ENCODE measurements at regions of chr4 and their contacts with region 1.

Region 1: DNA sequence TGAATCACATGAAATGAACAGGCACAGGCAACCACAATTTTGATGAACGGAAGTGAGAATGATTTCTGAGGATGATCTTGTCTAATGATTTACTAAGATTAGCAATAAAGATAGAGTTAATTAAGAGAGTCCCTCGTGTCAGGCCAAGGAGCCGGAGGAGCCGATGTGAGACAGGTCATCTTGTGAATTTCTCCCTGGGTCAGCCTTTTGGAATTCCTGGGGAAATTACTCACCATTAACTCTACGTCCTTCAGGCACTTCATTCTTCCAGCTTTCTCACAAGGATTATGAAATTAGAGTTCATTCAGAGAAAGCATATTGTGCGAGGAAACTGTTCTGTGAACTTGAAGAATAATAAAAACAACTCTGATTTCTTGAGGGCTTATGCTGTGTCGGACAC is 86.7 kb downstream of the PSAPL1 start:
- DNase-seq: no peak
- H3K4me3 ChIP-seq: no peak overlapping the region
- H3K4me3 Mint-ChIP-seq: no peak overlapping the region
- H3K27ac Mint-ChIP-seq: no peak overlapping the region
- H3K4me1 ChIP-seq: no peaks in the 10 kb centered on the region
- H3K4me1 Mint-ChIP-seq: no peaks in the 10 kb centered on the region
- H3K27me3 ChIP-seq: no peaks in the 10 kb centered on the region
- H3K27me3 Mint-ChIP-seq: no peaks in the 10 kb centered on the region
- CTCF ChIP-seq: no peak

Region 2: DNA sequence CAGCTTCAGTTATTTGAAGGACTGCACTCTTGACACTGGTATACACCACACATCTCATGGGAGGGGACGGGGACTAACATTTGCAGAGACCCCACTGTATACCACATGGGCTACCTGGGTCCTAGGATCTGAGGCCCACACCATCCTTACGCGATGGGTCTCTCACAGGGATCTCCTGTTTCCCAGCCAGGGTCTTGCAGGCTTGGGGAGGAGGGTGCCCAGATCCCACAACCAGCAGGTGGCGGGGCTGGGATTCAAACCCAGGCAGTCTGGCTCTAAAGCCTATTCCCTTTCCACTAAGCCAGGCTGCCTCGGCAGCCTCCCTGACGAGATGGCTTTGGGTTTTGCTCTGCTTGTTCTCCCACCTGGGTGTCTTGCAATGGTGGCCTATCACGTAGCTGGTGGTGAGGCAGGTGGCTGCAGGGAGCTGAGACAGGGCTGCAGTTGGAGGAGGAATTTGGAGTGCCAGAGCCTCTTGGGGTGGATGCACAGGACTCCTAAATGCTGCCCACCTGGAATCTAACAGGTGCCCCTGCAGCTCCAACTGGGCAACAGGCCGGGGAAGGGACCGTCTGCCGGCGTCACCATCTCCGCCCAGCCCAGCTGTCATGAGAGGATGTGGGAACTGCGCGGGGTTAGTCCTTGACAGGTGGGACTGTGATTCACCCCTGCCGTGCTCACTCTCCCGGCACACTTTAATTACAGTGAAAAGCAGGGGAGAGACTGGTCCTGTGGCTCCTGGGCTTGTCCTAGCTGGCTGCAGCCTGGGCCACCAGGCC is 23.9 kb before region 1 on chr4:
- CTCF ChIA-PET with region 1: interaction called, 10 read pairs
- POLR2A ChIA-PET with region 1: no interaction called
- intact Hi-C with region 1: no loop called
- DNase-seq: peak in 1 of 2 experiments; percentile 40
- H3K4me3 ChIP-seq: no peak overlapping the region
- H3K4me3 Mint-ChIP-seq: no peak overlapping the region
- H3K27ac Mint-ChIP-seq: no peak overlapping the region
- H3K4me1 ChIP-seq: no peaks in the 10 kb centered on the region
- H3K4me1 Mint-ChIP-seq: peaks cover 9% of the 10 kb centered on the region
- H3K27me3 ChIP-seq: no peaks in the 10 kb centered on the region
- H3K27me3 Mint-ChIP-seq: no peaks in the 10 kb centered on the region
- CTCF ChIP-seq: peak in 1 of 2 experiments; percentile 11

Region 3: DNA sequence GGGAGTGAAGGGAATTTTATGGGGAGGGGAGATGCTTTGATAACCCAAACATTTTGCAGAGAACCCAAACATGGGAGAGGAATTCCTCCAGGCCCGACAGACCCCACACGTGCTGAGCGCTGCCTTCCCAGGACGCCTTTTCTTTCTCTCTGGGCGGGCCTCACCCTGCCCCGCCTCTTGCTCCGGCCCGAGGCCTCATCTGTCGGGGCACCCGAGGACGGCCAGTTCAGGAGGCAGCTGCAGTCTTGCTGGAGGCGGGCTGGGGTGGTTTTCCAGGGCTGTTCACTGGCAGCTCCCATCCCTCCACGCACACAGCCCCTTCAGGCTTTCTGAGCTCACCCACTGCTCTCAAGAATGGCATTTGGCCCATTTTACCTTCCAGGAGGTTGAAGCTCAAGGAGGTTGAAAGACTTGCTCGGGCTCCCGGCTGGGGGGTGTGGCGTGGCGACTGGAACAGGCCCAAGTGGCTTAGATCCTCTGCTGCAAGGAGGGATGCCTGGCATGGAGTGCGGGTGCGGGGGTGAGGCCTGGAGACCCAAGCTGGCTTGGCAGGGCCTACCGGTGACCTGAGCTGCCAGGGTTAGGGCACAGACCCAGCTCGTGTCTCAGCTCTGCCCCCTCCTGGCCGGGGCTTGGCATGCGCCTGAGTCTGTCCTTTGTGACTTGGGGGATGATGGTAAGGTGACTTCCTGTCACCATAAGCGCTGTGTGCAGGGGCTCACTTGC is 12.5 kb before region 1 on chr4:
- CTCF ChIA-PET with region 1: interaction called, 11 read pairs
- POLR2A ChIA-PET with region 1: no interaction called
- intact Hi-C with region 1: no loop called
- DNase-seq: peak; percentile 63 to 76
- H3K4me3 ChIP-seq: no peak overlapping the region
- H3K4me3 Mint-ChIP-seq: no peak overlapping the region
- H3K27ac Mint-ChIP-seq: no peak overlapping the region
- H3K4me1 ChIP-seq: no peaks in the 10 kb centered on the region
- H3K4me1 Mint-ChIP-seq: no peaks in the 10 kb centered on the region
- H3K27me3 ChIP-seq: no peaks in the 10 kb centered on the region
- H3K27me3 Mint-ChIP-seq: no peaks in the 10 kb centered on the region
- CTCF ChIP-seq: peak; percentile 70 to 74

Measured in Caco-2 (cell line).